Breast epithelium (tissue), 4 donors: ENCODE measurements at regions of chr11 and their contacts with region 1.

Region 1: GRCh38 chr11:72026090-72026489 is 27.4 kb downstream of the IL18BP start:
- DNase-seq: no peak
- H3K4me3 ChIP-seq: no peak overlapping the region
- H3K27ac ChIP-seq: peak overlapping the region; percentile 60 to 67
- H3K4me1 ChIP-seq: peaks cover 4 to 8% of the 10 kb centered on the region in 2 donors
- H3K27me3 ChIP-seq: no peaks in the 10 kb centered on the region
- CTCF ChIP-seq: no peak
- POLR2A ChIP-seq: no peak

Region 2: GRCh38 chr11:72001834-72002591 is 24.1 kb before region 1 on chr11:
- intact Hi-C with region 1: loop called (anchors 1 kb)
- DNase-seq: peak in 1 of 2 donors; percentile 35
- H3K4me3 ChIP-seq: no peak overlapping the region
- H3K27ac ChIP-seq: peak overlapping the region in 1 of 2 donors; percentile 34
- H3K4me1 ChIP-seq: peaks cover 0 to 7% of the 10 kb centered on the region in 2 donors
- H3K27me3 ChIP-seq: no peaks in the 10 kb centered on the region
- CTCF ChIP-seq: no peak
- POLR2A ChIP-seq: no peak

Region 3: DNA sequence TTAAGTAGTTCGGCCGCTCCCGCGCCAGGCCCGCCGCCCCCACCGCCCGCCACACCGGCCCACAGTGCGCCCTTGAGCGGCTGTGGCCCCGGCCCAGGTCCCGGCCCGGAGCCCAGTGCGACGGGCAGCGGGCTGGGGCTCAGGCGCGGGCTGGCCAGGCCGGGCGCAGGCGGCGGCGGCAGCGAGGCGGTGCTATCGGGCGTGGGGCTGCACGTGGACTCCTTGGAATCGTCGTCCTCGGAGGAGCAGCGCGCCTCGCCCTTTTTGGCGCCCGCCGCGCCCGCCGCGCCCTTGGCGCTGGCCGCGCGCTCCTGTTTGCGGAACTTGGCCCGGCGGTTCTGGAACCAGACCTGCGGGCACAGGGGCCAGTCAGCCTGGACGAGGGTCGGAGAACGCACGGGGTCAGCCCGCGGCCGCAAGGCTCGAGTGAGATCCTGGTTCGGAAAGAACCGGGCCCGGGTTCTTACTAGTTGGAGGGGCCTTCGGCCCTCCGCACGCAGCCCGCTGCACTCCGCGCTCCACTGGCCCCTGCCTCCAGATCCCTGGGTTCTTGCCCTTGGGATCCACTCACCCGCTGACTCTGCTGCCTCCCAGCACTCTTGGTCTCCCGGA is 213.9 kb after region 1 on chr11:
- intact Hi-C with region 1: loop called (anchors 10 kb)
- DNase-seq: no peak
- H3K4me3 ChIP-seq: peak overlapping the region; percentile 17 to 73 (median 46)
- H3K27ac ChIP-seq: peak overlapping the region; percentile 52 to 71
- H3K4me1 ChIP-seq: peaks cover 0 to 15% of the 10 kb centered on the region in 2 donors
- H3K27me3 ChIP-seq: peaks cover 6 to 28% of the 10 kb centered on the region in 2 donors
- CTCF ChIP-seq: no peak
- POLR2A ChIP-seq: no peak